B cell (primary cell): ENCODE measurements at regions of chr4 and their contacts with region 1.

Region 1: DNA sequence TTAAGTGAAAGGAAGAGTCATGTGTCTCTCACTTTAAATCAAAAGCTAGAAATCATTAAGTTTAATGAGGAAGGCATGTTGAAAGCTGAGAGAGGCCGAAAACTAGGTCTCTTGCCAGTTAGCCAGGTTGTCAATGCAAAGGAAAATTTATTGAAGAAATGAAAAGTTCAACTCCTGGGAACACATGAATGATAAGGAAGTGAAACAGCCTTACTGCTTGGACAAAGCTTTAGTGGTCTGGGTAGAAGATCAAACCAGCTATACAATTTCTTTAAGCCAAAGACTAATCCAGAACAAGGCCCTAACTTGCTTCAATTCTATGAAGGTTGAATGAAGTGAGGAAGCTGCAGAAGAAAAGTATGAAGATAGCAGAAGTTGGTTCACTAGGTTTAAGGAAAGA is 24.9 kb downstream of the RHOH start:
- DNase-seq: no peak
- ATAC-seq: no peak
- H3K4me3 ChIP-seq: no peak overlapping the region
- H3K4me3 Mint-ChIP-seq: peak overlapping the region; percentile 38
- H3K27ac ChIP-seq: peak overlapping the region in 1 of 2 donors; percentile 73
- H3K27ac Mint-ChIP-seq: peak overlapping the region; percentile 64
- H3K4me1 ChIP-seq: peaks cover 80 to 91% of the 10 kb centered on the region in 2 donors
- H3K4me1 Mint-ChIP-seq: peaks cover 87% of the 10 kb centered on the region
- H3K27me3 ChIP-seq: no peaks in the 10 kb centered on the region
- H3K27me3 Mint-ChIP-seq: no peaks in the 10 kb centered on the region
- CTCF ChIP-seq: no peak

Region 2: DNA sequence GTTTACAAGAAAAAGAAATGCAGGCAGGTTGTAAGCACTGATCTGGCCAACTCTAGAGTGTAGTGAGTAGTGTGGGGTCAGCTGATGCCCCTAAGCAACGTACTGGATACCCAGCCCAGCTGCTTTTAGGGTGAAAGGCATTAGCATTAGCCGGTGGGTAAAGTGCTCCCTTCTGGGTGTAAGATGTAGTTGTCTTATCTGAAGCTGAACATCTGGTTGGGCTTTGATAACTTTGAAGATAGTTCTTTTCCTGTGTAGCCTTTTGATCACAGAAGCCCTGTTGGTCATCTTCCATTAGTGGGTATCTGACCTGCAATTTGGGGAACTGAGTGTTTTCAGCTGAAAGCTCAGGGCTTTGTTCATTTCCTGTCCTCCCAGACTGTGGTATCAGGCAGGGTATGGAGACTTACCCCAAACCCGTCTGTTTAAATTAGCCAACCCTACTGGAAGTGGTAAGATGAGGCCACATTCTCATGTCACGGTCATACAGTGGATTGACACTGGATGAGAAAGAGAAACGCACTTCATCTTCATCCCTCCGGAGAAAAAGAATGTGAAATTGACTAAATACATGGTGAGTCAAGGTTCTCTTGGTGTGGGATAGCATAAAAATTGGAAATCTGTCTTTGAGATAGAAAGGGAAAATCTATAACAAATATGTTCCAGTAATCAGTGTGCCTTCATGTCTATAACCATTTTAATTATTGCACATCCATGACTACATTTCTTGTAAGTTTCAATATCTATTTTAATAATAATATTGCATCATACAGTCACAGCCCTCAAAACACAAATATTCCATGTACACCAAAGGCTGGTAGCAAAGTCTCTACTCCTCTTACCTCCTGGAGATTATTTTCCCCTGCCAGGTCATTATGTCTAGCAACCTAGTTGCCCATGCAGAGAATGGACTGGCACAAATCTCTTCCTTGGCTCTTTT is 16.2 kb before region 1 on chr4:
- CTCF ChIA-PET with region 1: interaction called, 6 read pairs
- POLR2A ChIA-PET with region 1: interaction called, 3 read pairs
- intact Hi-C with region 1: loop called (anchors 2 kb)
- DNase-seq: peak; percentile 66
- ATAC-seq: peak; percentile 46
- H3K4me3 ChIP-seq: peak overlapping the region; percentile 21 to 61 (median 43)
- H3K4me3 Mint-ChIP-seq: peak overlapping the region; percentile 86
- H3K27ac ChIP-seq: peak overlapping the region; percentile 65 to 82
- H3K27ac Mint-ChIP-seq: peak overlapping the region; percentile 88
- H3K4me1 ChIP-seq: peaks cover 83 to 88% of the 10 kb centered on the region in 2 donors
- H3K4me1 Mint-ChIP-seq: peaks cover 87% of the 10 kb centered on the region
- H3K27me3 ChIP-seq: no peaks in the 10 kb centered on the region
- H3K27me3 Mint-ChIP-seq: no peaks in the 10 kb centered on the region
- CTCF ChIP-seq: no peak

Region 3: DNA sequence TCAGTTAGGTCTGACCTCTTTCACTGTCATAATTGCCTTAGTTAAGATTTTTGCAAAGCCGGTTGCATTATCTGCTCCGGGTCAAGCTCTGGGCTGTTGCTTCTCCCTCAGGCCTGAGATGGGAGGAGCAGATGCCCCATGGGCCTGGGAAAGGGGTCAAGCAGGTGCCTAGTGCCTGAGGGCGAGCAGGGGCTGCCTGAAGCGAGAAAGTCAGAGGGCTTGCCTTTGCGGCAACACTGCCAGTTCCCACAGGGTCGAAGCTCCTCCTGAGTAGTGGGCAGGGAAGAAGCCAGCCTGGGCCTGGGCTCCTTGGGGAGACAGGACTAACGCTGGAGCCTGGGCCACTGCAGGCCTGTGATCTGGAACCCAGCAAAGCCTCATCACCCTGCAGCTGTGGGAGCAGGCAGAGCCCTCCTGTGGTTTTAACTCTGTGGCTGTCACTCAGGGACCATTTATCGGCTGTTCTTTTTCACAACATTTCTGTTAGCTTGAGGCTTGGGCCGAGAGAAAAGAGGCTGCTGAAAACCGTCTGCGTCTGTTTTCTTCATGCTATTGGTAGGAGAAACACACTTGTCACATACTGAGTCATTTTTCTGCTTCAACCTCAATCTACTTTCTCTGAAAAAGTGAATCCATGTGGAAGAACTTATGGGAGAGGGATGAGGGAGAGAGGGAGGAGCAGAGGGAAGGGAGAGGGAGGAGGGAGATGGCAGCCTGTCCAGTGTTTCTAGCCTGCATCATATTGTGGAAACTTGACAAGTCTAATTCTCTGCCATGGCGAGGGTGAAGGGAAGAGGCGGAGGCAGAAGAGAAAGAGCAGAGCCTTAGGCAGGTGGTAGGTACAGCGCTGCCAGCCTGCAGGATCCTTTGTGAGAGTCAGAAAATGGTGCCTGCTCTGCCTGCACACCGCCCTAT is 43.5 kb after region 1 on chr4:
- CTCF ChIA-PET with region 1: no interaction called
- POLR2A ChIA-PET with region 1: no interaction called
- intact Hi-C with region 1: no loop called
- DNase-seq: peak; percentile 37
- ATAC-seq: peak; percentile 74
- H3K4me3 ChIP-seq: no peak overlapping the region
- H3K4me3 Mint-ChIP-seq: peak overlapping the region; percentile 56
- H3K27ac ChIP-seq: peak overlapping the region in 1 of 2 donors; percentile 11
- H3K27ac Mint-ChIP-seq: peak overlapping the region; percentile 76
- H3K4me1 ChIP-seq: peaks cover 13 to 17% of the 10 kb centered on the region in 2 donors
- H3K4me1 Mint-ChIP-seq: peaks cover 34% of the 10 kb centered on the region
- H3K27me3 ChIP-seq: no peaks in the 10 kb centered on the region
- H3K27me3 Mint-ChIP-seq: no peaks in the 10 kb centered on the region
- CTCF ChIP-seq: no peak

Region 4: GRCh38 chr4:40685300-40685699 is 463.6 kb after region 1 on chr4:
- CTCF ChIA-PET with region 1: no interaction called
- POLR2A ChIA-PET with region 1: no interaction called
- intact Hi-C with region 1: no loop called
- DNase-seq: no peak
- ATAC-seq: no peak
- H3K4me3 ChIP-seq: no peak overlapping the region
- H3K4me3 Mint-ChIP-seq: no peak overlapping the region
- H3K27ac ChIP-seq: no peak overlapping the region
- H3K27ac Mint-ChIP-seq: no peak overlapping the region
- H3K4me1 ChIP-seq: no peaks in the 10 kb centered on the region
- H3K4me1 Mint-ChIP-seq: no peaks in the 10 kb centered on the region
- H3K27me3 ChIP-seq: no peaks in the 10 kb centered on the region
- H3K27me3 Mint-ChIP-seq: peaks cover 5% of the 10 kb centered on the region
- CTCF ChIP-seq: no peak